ENCODE measurements at regions of chr9 and their contacts with region 1.

Region 1: GRCh38 chr9:36728651-36729520 is 156.2 kb downstream of the MELK start:
- DNase-seq: peak; percentile 90
- H3K4me3 Mint-ChIP-seq: no peak overlapping the region
- H3K27ac Mint-ChIP-seq: no peak overlapping the region
- H3K4me1 Mint-ChIP-seq: no peaks in the 10 kb centered on the region
- H3K27me3 Mint-ChIP-seq: no peaks in the 10 kb centered on the region

Region 2: GRCh38 chr9:36407122-36407723 is 321.7 kb before region 1 on chr9:
- intact Hi-C with region 1: loop called (anchors 1 kb)
- DNase-seq: peak; percentile 87
- H3K4me3 Mint-ChIP-seq: no peak overlapping the region
- H3K27ac Mint-ChIP-seq: no peak overlapping the region
- H3K4me1 Mint-ChIP-seq: peaks cover 10% of the 10 kb centered on the region
- H3K27me3 Mint-ChIP-seq: no peaks in the 10 kb centered on the region

Region 3: DNA sequence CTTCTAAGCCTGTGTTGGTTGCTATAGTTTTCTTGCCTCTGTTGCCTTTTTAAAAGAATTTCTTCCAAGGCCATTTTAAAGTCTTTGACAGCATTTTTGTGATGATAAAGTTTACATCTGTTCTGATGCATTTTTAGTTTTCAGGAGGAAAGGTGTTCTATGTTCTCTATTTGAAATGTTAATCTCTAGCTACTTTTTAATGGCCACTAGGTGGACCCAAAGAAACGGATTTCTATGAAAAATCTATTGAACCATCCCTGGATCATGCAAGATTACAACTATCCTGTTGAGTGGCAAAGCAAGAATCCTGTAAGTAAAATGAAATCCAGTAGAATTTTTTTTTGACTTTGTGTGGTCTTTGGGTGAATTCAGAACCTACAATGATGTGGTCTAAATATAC is 96.0 kb before region 1 on chr9:
- intact Hi-C with region 1: loop called (anchors 1 kb)
- DNase-seq: no peak
- H3K4me3 Mint-ChIP-seq: no peak overlapping the region
- H3K27ac Mint-ChIP-seq: no peak overlapping the region
- H3K4me1 Mint-ChIP-seq: peaks cover 3% of the 10 kb centered on the region
- H3K27me3 Mint-ChIP-seq: no peaks in the 10 kb centered on the region

Region 4: GRCh38 chr9:36749461-36749860 is 20.6 kb after region 1 on chr9:
- intact Hi-C with region 1: no loop called
- DNase-seq: no peak
- H3K4me3 Mint-ChIP-seq: no peak overlapping the region
- H3K27ac Mint-ChIP-seq: no peak overlapping the region
- H3K4me1 Mint-ChIP-seq: no peaks in the 10 kb centered on the region
- H3K27me3 Mint-ChIP-seq: peaks cover 18% of the 10 kb centered on the region